AG04450 (cell line): ENCODE measurements at regions of chr5 and their contacts with region 1.

Region 1: DNA sequence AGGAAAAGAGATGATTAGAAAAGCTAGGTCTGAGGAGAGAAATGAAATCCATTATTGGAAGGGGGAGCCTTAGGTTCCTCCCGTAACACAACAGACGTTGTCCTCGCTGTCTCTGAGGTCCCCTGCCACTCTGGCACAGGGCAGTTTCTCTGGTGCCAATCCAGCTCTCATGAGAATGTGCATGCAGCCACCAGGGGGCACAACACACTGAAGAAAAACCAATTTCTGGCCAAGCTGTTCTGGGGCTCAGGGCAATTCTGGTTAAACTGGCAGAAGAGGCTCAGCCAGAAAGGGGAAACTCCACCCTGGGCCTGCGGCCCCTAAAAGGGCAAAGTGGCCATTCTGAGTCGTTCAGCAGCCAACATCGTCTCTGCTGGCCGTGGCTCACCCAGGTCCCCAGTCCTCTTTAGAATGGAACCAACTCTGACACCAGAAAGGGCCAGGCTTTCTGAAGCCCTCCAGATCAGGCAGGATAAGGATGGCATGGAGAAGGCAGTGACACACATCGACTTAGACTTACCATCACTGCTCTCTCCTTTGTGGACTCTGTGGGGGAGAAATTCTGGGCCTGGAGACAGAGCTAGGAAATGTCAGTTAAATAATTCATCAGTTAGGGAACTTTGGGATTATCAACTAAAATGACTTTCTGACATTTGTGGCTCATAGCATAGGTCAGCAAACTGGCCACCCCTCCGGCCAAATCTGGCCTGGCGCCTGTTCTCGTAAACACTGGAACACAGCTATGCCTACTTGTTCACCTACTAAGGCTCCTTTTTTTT is 58.5 kb upstream of the GOLPH3 start:
- DNase-seq: peak; percentile 34
- H3K4me3 ChIP-seq: no peak overlapping the region
- H3K27ac ChIP-seq: no peak overlapping the region
- H3K27me3 ChIP-seq: no peaks in the 10 kb centered on the region
- CTCF ChIP-seq: peak; percentile 80

Region 2: GRCh38 chr5:32388432-32389129 is 156.0 kb after region 1 on chr5:
- CTCF ChIA-PET with region 1: interaction called, 11 read pairs
- POLR2A ChIA-PET with region 1: no interaction called
- DNase-seq: peak; percentile 13
- H3K4me3 ChIP-seq: no peak overlapping the region
- H3K27ac ChIP-seq: no peak overlapping the region
- H3K27me3 ChIP-seq: no peaks in the 10 kb centered on the region
- CTCF ChIP-seq: no peak